GM10248 (cell line): ENCODE measurements at regions of chr1 and their contacts with region 1.

Region 1: GRCh38 chr1:206663832-206664652 is 20.7 kb upstream of the MAPKAPK2 start:
- DNase-seq: peak; percentile 78
- CTCF ChIP-seq: peak; percentile 66

Region 2: DNA sequence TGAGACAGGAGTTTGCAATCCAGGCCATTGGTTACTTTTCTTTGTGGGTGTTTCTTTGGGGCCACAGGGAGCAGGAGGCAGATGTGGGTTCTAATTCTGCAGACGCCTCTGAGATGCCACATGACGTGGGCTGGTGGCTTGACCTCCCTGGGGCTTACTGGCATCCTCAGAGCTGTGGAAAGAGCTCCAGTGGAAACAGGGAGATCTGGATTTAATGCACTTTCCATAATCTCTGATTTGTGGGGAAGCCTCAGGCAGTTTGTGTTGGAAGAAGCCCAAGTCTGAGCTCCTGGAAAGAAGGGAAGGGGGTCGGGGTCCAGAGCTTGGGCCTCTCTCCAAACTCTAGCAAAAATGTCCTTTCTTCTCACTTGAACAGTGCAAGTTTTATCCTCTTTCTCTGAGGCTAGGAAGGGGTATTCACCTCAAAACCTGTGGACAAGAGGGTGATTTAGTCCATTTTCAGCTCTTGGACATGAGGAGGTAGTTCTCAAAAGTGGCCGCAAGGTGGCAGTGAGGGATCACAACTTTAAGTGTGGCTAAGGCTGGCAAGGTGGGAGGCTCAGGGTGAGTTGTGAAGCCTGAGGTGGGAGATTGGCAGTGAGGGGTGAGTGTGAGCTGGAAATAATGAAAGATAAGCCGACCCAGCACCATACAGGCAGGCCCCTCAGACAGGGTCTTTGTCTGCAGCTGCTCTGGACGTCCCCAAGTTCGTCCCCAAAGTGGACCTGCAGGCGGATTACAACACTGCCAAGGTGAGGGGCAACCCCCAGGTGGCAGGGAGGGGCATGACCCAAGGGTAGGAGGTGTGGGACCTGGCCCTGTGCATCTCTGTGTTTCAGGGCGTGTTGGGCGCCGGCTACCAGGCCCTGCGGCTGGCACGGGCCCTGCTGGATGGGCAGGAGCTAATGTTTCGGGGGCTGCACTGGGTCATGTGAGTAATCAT is 184.6 kb before region 1 on chr1:
- CTCF ChIA-PET with region 1: interaction called, 33 read pairs
- POLR2A ChIA-PET with region 1: no interaction called
- DNase-seq: peak; percentile 85
- CTCF ChIP-seq: peak; percentile 74

Region 3: DNA sequence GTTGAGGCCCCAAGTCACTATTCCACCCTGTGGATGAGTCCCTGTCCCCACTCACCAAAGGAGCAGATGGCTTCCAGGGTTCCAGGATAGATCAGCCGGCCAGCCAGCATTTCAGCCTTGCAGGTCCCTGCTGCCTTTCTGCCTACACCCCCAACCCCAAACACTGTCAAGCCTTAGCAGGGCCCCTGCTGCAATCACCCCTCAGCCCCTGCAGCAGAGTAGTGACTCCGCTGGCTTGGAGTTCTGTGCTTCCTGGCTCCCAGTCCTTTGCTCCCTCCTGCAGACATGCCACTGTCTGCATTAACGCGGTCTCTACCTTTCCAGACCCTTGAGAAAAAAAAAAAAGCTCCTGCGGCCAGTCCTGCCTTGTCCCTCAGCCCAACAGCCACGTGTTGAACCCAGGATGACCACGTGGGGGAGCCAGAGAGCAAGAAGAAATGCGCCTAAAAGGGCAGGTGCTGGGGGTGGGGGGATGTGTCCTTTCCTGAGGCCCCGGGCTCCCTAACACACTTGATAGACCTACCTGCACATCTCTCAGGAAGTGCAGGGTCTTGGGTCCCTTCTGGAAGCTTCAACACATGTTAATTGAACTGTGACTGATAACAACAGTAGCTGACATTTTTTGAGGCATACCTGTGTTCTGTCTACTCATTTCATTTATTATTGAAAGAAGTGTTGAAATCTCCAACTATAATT is 119.3 kb before region 1 on chr1:
- CTCF ChIA-PET with region 1: interaction called, 20 read pairs
- POLR2A ChIA-PET with region 1: no interaction called
- DNase-seq: peak; percentile 85
- CTCF ChIP-seq: peak; percentile 93

Region 4: GRCh38 chr1:206612129-206612876 is 51.7 kb before region 1 on chr1 and contains the start of gene EIF2D:
- CTCF ChIA-PET with region 1: interaction called, 139 read pairs
- POLR2A ChIA-PET with region 1: no interaction called
- DNase-seq: peak; percentile 100
- CTCF ChIP-seq: peak; percentile 95

Region 5: GRCh38 chr1:206693029-206693428 is 29.0 kb after region 1 on chr1:
- CTCF ChIA-PET with region 1: interaction called, 42 read pairs
- POLR2A ChIA-PET with region 1: no interaction called
- DNase-seq: no peak
- CTCF ChIP-seq: no peak

Region 6: GRCh38 chr1:206808615-206809014 is 144.6 kb after region 1 on chr1:
- CTCF ChIA-PET with region 1: interaction called, 49 read pairs
- POLR2A ChIA-PET with region 1: no interaction called
- DNase-seq: no peak
- CTCF ChIP-seq: peak; percentile 76

Region 7: DNA sequence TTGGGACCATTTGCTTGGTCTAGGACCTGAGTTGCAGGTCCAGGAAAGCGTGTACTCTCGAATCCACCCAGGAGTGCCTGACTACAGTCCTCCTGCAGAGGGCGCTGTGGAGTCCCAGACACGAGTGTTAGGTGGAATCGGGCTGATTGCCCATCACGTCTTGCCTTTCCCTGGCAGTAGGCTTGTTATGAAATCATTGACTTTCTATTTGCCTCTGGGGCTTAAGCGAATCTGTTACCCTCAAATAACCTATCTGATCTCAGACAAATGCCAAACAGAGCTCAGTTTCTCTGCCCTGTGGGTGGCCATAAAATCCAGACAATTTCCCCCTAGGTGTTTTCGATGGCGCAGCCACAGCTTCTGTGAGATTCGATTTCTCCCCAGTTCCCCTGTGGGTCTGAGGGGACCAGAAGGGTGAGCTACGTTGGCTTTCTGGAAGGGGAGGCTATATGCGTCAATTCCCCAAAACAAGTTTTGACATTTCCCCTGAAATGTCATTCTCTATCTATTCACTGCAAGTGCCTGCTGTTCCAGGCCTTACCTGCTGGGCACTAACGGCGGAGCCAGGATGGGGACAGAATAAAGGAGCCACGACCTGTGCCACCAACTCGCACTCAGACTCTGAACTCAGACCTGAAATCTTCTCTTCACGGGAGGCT is 201.1 kb after region 1 on chr1 and contains the start of gene IL20:
- CTCF ChIA-PET with region 1: no interaction called
- POLR2A ChIA-PET with region 1: no interaction called
- DNase-seq: peak; percentile 69
- CTCF ChIP-seq: peak; percentile 91